Common myeloid progenitor, CD34-positive (primary cell): ENCODE measurements at regions of chr20 and their contacts with region 1.

Region 1: GRCh38 chr20:2172305-2173175 is 70.9 kb downstream of the STK35 start:
- DNase-seq: peak; percentile 54 to 69 (median 69)
- H3K4me3 ChIP-seq: no peak overlapping the region
- H3K27ac ChIP-seq: no peak overlapping the region
- H3K4me1 ChIP-seq: peaks cover 0 to 8% (median 4%) of the 10 kb centered on the region in 4 experiments
- H3K27me3 ChIP-seq: peaks cover 0 to 5% (median 4%) of the 10 kb centered on the region in 5 experiments

Region 2: GRCh38 chr20:1965520-1966351 is 206.8 kb before region 1 on chr20:
- CTCF ChIA-PET with region 1: interaction called, 11 read pairs
- POLR2A ChIA-PET with region 1: no interaction called
- DNase-seq: peak; percentile 67 to 80 (median 79)
- H3K4me3 ChIP-seq: peak overlapping the region in 6 of 7 experiments; percentile 8 to 72 (median 45)
- H3K27ac ChIP-seq: no peak overlapping the region
- H3K4me1 ChIP-seq: peaks cover 10 to 18% (median 11%) of the 10 kb centered on the region in 4 experiments
- H3K27me3 ChIP-seq: peaks cover 0 to 13% (median 7%) of the 10 kb centered on the region in 5 experiments

Region 3: DNA sequence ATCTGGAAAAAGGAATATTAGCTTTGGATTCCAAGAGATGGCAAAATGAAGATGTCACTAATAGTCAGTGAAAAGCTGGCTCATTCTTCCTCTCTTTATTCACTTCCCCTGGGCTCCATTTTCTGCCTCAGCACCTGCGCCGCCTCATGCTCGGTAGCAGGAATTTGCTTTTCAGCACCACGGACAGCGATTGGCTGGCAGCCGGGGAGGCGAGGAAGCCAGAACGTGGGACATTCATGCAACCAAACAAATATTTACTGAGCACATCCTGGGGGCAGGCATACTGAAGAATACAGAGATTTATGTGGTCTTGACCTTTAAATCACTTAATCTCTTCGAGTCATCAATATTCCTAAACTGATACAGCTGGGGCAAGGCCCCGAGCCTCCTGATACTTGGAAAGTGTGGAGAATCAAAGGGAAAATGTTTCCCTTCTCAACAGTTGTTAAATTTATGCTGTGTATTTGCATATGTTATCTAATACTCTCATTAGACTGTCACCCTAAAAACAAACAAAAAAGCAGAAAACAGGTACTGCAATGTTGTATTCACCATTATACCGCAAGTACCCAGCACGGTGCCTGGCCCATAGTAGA is 166.6 kb before region 1 on chr20:
- CTCF ChIA-PET with region 1: interaction called, 65 read pairs
- POLR2A ChIA-PET with region 1: no interaction called
- DNase-seq: peak; percentile 68 to 84 (median 81)
- H3K4me3 ChIP-seq: no peak overlapping the region
- H3K27ac ChIP-seq: no peak overlapping the region
- H3K4me1 ChIP-seq: no peaks in the 10 kb centered on the region
- H3K27me3 ChIP-seq: peaks cover 0 to 29% (median 4%) of the 10 kb centered on the region in 5 experiments

Region 4: GRCh38 chr20:2183381-2183780 is 10.8 kb after region 1 on chr20:
- CTCF ChIA-PET with region 1: interaction called, 11 read pairs
- POLR2A ChIA-PET with region 1: interaction called, 3 read pairs
- DNase-seq: no peak
- H3K4me3 ChIP-seq: no peak overlapping the region
- H3K27ac ChIP-seq: no peak overlapping the region
- H3K4me1 ChIP-seq: peaks cover 0 to 14% (median 12%) of the 10 kb centered on the region in 4 experiments
- H3K27me3 ChIP-seq: no peaks in the 10 kb centered on the region

Region 5: GRCh38 chr20:2206957-2207769 is 34.6 kb after region 1 on chr20:
- CTCF ChIA-PET with region 1: interaction called, 10 read pairs
- POLR2A ChIA-PET with region 1: no interaction called
- DNase-seq: peak; percentile 50 to 77 (median 69)
- H3K4me3 ChIP-seq: peak overlapping the region; percentile 31 to 74 (median 66)
- H3K27ac ChIP-seq: no peak overlapping the region
- H3K4me1 ChIP-seq: peaks cover 0 to 17% (median 12%) of the 10 kb centered on the region in 4 experiments
- H3K27me3 ChIP-seq: peaks cover 2 to 71% (median 18%) of the 10 kb centered on the region in 5 experiments